ENCODE measurements at regions of chr11 and their contacts with region 1.

Region 1: GRCh38 chr11:61429691-61430582 is at the starts of genes CPSF7 and SDHAF2:
- DNase-seq: peak; percentile 94 to 99 (median 97)
- ATAC-seq: peak; percentile 81
- H3K4me3 ChIP-seq: peak within 1 kb of the TSS; percentile 93
- H3K4me3 Mint-ChIP-seq: peak within 1 kb of the TSS; percentile 92
- H3K27ac ChIP-seq: peak within 1 kb of the TSS; percentile 99
- H3K27ac Mint-ChIP-seq: peak within 1 kb of the TSS; percentile 99
- H3K4me1 ChIP-seq: peaks cover 41% of the 10 kb centered on the region
- H3K4me1 Mint-ChIP-seq: peaks cover 81% of the 10 kb centered on the region
- H3K27me3 ChIP-seq: no peaks in the 10 kb centered on the region
- H3K27me3 Mint-ChIP-seq: no peaks in the 10 kb centered on the region
- CTCF ChIP-seq: no peak
- total RNA-seq, gene CPSF7: 111 to 116 TPM
- total RNA-seq, gene SDHAF2: 28.7 to 33.0 TPM

Region 2: GRCh38 chr11:59426361-59427068 is 2003.4 kb before region 1 on chr11 and contains the start of gene OR5A2:
- CTCF ChIA-PET with region 1: no interaction called
- POLR2A ChIA-PET with region 1: no interaction called
- intact Hi-C with region 1: no loop called
- DNase-seq: no peak
- ATAC-seq: no peak
- H3K4me3 ChIP-seq: no peak within 1 kb of the TSS
- H3K4me3 Mint-ChIP-seq: no peak within 1 kb of the TSS
- H3K27ac ChIP-seq: no peak within 1 kb of the TSS
- H3K27ac Mint-ChIP-seq: no peak within 1 kb of the TSS
- H3K4me1 ChIP-seq: no peaks in the 10 kb centered on the region
- H3K4me1 Mint-ChIP-seq: no peaks in the 10 kb centered on the region
- H3K27me3 ChIP-seq: peaks cover 3 to 4% of the 10 kb centered on the region in 2 experiments
- H3K27me3 Mint-ChIP-seq: peaks cover 5% of the 10 kb centered on the region
- CTCF ChIP-seq: no peak
- total RNA-seq, gene OR5A2: not detected

Region 3: DNA sequence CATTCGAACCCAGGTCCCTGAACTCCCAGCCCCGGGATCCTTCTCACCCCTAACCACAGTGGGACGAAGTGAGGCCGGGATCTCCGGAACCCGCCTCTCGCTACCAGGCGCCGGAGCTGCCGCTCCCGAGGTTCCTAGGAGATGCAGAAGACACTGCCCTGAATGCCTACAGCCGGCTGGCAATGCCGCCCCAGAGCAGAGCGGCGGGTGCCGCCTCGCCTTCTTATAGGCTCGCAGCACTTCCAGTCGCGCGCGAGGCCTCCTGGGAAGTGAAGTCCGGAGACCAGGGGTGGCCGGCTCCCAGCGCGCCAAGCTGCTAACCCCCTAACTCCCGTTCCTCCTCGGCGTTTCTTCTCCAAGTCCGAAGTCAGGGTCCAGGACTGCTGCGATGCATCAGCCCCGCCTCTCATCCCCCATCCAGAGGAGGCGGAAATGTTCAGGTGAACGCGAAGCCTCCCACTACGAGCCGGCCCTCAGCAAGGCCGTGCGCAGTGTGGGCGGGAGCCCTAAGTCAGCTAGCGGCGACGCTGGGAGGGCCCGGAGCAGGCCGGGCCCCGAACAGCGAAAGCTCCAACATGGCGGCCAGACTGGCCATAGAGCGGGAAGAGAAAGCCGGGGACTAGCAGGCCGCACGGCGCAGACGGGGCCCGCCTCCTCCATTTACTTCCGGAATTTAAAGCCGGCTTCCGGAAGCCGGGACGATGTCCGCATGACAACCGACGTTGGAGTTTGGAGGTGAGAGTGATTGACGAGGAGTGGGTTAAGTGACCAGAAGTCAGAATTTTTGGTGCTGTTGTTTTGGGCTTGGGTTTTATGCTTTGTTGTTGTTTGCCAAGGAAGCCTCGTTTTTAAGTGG is 68.0 kb before region 1 on chr11 and contains the starts of genes CYB561A3 and TMEM138:
- CTCF ChIA-PET with region 1: interaction called, 15 read pairs
- POLR2A ChIA-PET with region 1: interaction called, 45 read pairs
- intact Hi-C with region 1: loop called in 1 of 2 experiments (anchors 1 kb)
- DNase-seq: peak; percentile 75 to 94 (median 82)
- ATAC-seq: peak; percentile 84
- H3K4me3 ChIP-seq: peak within 1 kb of the TSS; percentile 99
- H3K4me3 Mint-ChIP-seq: peak within 1 kb of the TSS; percentile 99
- H3K27ac ChIP-seq: peak within 1 kb of the TSS; percentile 95 to 100
- H3K27ac Mint-ChIP-seq: peak within 1 kb of the TSS; percentile 100
- H3K4me1 ChIP-seq: peaks cover 35% of the 10 kb centered on the region
- H3K4me1 Mint-ChIP-seq: peaks cover 36% of the 10 kb centered on the region
- H3K27me3 ChIP-seq: no peaks in the 10 kb centered on the region
- H3K27me3 Mint-ChIP-seq: no peaks in the 10 kb centered on the region
- CTCF ChIP-seq: no peak
- total RNA-seq, gene CYB561A3: 24.4 to 25.8 TPM
- total RNA-seq, gene TMEM138: 59.2 to 60.9 TPM

Region 4: GRCh38 chr11:61392981-61393595 is 36.8 kb before region 1 on chr11:
- CTCF ChIA-PET with region 1: interaction called, 8 read pairs
- POLR2A ChIA-PET with region 1: interaction called, 30 read pairs
- intact Hi-C with region 1: loop called (anchors 5 kb)
- DNase-seq: peak in 9 of 14 experiments; percentile 3 to 65 (median 14)
- ATAC-seq: peak; percentile 59
- H3K4me3 ChIP-seq: peak overlapping the region; percentile 76
- H3K4me3 Mint-ChIP-seq: peak overlapping the region; percentile 98
- H3K27ac ChIP-seq: peak overlapping the region; percentile 79 to 89
- H3K27ac Mint-ChIP-seq: peak overlapping the region; percentile 99
- H3K4me1 ChIP-seq: peaks cover 28% of the 10 kb centered on the region
- H3K4me1 Mint-ChIP-seq: peaks cover 23% of the 10 kb centered on the region
- H3K27me3 ChIP-seq: no peaks in the 10 kb centered on the region
- H3K27me3 Mint-ChIP-seq: no peaks in the 10 kb centered on the region
- CTCF ChIP-seq: peak; percentile 51

Region 5: GRCh38 chr11:61417670-61418069 is 12.3 kb before region 1 on chr11:
- CTCF ChIA-PET with region 1: interaction called, 3 read pairs
- POLR2A ChIA-PET with region 1: interaction called, 10 read pairs
- intact Hi-C with region 1: no loop called
- DNase-seq: peak in 2 of 14 experiments; percentile 40 to 53
- ATAC-seq: no peak
- H3K4me3 ChIP-seq: no peak overlapping the region
- H3K4me3 Mint-ChIP-seq: no peak overlapping the region
- H3K27ac ChIP-seq: no peak overlapping the region
- H3K27ac Mint-ChIP-seq: peak overlapping the region; percentile 6
- H3K4me1 ChIP-seq: peaks cover 12% of the 10 kb centered on the region
- H3K4me1 Mint-ChIP-seq: peaks cover 40% of the 10 kb centered on the region
- H3K27me3 ChIP-seq: no peaks in the 10 kb centered on the region
- H3K27me3 Mint-ChIP-seq: no peaks in the 10 kb centered on the region
- CTCF ChIP-seq: no peak

Region 6: GRCh38 chr11:61446211-61446651 is 16.3 kb after region 1 on chr11:
- CTCF ChIA-PET with region 1: interaction called, 23 read pairs
- POLR2A ChIA-PET with region 1: interaction called, 5 read pairs
- intact Hi-C with region 1: no loop called
- DNase-seq: peak; percentile 45 to 82 (median 64)
- ATAC-seq: peak; percentile 98
- H3K4me3 ChIP-seq: no peak overlapping the region
- H3K4me3 Mint-ChIP-seq: no peak overlapping the region
- H3K27ac ChIP-seq: no peak overlapping the region
- H3K27ac Mint-ChIP-seq: peak overlapping the region; percentile 54
- H3K4me1 ChIP-seq: peaks cover 6% of the 10 kb centered on the region
- H3K4me1 Mint-ChIP-seq: peaks cover 26% of the 10 kb centered on the region
- H3K27me3 ChIP-seq: no peaks in the 10 kb centered on the region
- H3K27me3 Mint-ChIP-seq: no peaks in the 10 kb centered on the region
- CTCF ChIP-seq: peak; percentile 68

Region 7: DNA sequence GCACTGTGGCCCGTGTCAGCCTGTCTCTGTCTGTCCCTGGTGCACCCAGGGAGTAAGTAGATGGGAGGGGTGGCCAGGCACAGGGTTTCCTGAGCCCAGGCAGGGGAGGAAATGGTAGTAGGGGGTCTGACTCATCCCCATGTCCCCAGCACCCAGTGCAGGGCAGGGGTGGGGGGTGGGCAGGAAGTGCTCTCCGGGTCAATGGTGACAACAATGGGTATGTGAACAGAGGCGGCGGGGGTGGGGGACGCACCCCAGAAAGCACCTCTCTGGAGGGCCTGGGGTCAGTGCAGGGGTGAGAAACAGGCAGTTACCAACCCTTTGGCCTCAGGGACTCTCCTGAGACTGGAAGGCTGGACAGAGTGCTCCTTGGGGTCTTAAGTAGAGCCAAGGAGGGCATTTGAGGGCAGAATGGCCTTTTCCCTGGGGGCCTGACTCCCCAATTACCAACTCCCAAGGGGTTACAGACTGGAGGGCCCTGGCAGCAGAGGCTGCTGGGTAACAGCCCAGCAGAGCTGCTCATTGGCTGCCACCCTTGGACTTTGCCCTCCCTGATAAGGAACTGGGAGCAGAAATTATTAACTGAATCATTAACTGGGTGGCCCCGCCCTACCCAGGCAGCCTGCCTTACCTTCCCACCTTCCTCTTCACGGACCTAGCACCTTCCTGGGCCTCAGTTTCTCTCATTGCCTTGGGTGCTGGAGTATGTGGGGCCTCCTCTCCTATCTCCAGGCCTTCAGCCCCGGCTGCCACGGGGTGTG is 326.7 kb after region 1 on chr11:
- CTCF ChIA-PET with region 1: no interaction called
- POLR2A ChIA-PET with region 1: no interaction called
- intact Hi-C with region 1: no loop called
- DNase-seq: peak in 9 of 14 experiments; percentile 18 to 43 (median 29)
- ATAC-seq: no peak
- H3K4me3 ChIP-seq: no peak overlapping the region
- H3K4me3 Mint-ChIP-seq: no peak overlapping the region
- H3K27ac ChIP-seq: no peak overlapping the region
- H3K27ac Mint-ChIP-seq: no peak overlapping the region
- H3K4me1 ChIP-seq: peaks cover 25% of the 10 kb centered on the region
- H3K4me1 Mint-ChIP-seq: peaks cover 10% of the 10 kb centered on the region
- H3K27me3 ChIP-seq: peaks cover 4 to 5% of the 10 kb centered on the region in 2 experiments
- H3K27me3 Mint-ChIP-seq: peaks cover 20% of the 10 kb centered on the region
- CTCF ChIP-seq: no peak

Measured in CD4-positive, alpha-beta T cell (primary cell).